HCT116 (cell line): ENCODE measurements at regions of chr14 and their contacts with region 1.

Region 1: DNA sequence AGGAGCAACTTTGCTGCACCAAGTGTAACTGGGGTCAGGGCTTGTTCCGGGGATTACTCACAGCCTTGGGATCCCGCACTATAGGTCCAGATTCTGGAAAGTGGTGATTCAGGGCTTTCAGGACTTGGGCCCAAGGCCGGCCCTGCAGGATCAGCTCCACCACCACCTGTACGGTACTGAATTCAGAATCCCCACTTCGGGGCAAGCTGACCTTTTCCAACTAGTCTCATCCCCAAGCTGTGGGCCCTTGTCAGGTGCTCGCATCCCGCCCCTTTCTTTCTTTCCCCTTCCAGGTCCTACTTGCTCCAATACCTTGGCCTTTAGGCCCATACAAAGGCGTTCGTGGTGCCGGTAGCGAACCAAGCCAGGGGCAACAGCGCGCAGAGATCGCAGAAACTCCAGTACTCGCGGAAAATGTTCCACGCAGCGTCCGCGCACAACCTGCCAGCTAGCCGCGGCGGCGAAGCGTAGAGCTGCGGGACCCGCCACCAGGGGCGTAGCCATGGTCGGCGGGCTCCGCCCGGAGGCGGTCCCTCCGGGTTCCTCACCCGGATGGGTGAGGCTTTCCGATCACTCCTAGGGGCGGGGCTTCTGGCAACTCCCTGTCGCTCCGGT is 487 bp downstream of the TINF2 start:
- DNase-seq: peak; percentile 86
- ATAC-seq: peak; percentile 90
- H3K4me3 ChIP-seq: peak overlapping the region; percentile 72 to 75
- H3K27ac ChIP-seq: peak overlapping the region; percentile 99
- H3K4me1 ChIP-seq: peaks cover 11 to 40% of the 10 kb centered on the region in 2 experiments
- H3K27me3 ChIP-seq: no peaks in the 10 kb centered on the region
- CTCF ChIP-seq: peak in 1 of 3 experiments; percentile 57; a peak in 2 of 6 replicates
- POLR2A ChIP-seq: no peak
- RAD21 ChIP-seq: no peak

Region 2: DNA sequence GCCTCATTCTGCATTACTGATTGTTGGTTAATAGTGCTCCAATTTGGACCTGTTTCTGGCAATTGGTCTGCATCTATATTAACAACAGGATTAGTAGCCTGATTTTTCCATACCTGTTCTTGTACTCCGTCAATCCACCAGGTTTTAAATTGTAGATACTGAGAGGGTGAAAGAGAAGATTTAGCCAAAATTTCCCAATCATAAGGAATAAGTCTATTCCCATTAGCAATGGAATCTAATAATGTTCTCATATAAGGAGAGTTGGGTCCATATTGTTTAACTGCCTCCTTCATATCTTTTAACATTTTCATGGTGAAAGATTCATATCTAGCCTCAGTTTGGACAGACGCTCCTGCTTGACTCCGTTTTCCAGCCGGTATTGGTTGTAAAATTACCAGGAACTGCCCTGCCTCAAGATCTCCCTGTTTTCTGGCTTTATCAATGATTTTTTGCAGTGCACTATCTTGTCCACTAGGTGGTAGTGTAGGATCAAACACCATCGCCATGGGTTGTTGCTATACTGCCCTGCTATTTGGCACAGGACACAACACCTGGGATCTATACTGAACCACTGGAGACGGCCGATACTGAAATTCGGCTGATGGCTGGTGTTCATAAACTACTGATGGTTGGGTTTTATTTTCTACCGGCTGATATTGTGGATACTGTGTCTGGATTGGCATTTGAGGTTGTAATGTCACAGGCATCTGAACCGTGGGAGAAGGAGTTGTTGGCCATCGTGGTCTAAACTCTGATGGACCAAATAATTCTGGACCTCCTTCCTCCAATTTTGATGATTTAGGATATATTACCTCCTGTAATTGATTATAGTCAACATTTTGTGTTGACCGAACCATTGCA is 228.1 kb before region 1 on chr14:
- CTCF ChIA-PET with region 1: no interaction called
- POLR2A ChIA-PET with region 1: no interaction called
- RAD21 ChIA-PET with region 1: no interaction called
- intact Hi-C with region 1: no loop called
- DNase-seq: peak; percentile 78
- ATAC-seq: peak; percentile 99
- H3K4me3 ChIP-seq: no peak overlapping the region
- H3K27ac ChIP-seq: no peak overlapping the region
- H3K4me1 ChIP-seq: peaks cover 0 to 4% of the 10 kb centered on the region in 2 experiments; a peak in 1 of 4 replicates
- H3K27me3 ChIP-seq: no peaks in the 10 kb centered on the region
- CTCF ChIP-seq: peak; percentile 86 to 90 (median 87)
- POLR2A ChIP-seq: no peak
- RAD21 ChIP-seq: peak; percentile 95

Region 3: GRCh38 chr14:24271134-24271833 is 29.3 kb after region 1 on chr14 and contains the start of gene RABGGTA:
- CTCF ChIA-PET with region 1: interaction called, 17 read pairs
- POLR2A ChIA-PET with region 1: interaction called, 20 read pairs
- RAD21 ChIA-PET with region 1: no interaction called
- intact Hi-C with region 1: loop called (anchors 1 kb)
- DNase-seq: peak; percentile 85
- ATAC-seq: peak; percentile 97
- H3K4me3 ChIP-seq: peak within 1 kb of the TSS; percentile 79 to 92
- H3K27ac ChIP-seq: peak within 1 kb of the TSS; percentile 86
- H3K4me1 ChIP-seq: peaks cover 9 to 22% of the 10 kb centered on the region in 2 experiments; a peak in 3 of 4 replicates
- H3K27me3 ChIP-seq: no peaks in the 10 kb centered on the region
- CTCF ChIP-seq: peak; percentile 39 to 75 (median 60); a peak in 5 of 6 replicates
- POLR2A ChIP-seq: peak; percentile 76
- RAD21 ChIP-seq: no peak
- total RNA-seq, gene RABGGTA: 40.8 TPM

Region 4: GRCh38 chr14:24307575-24308341 is 65.8 kb after region 1 on chr14 and contains the start of gene CIDEB:
- CTCF ChIA-PET with region 1: interaction called, 33 read pairs
- POLR2A ChIA-PET with region 1: interaction called, 7 read pairs
- RAD21 ChIA-PET with region 1: no interaction called
- intact Hi-C with region 1: no loop called
- DNase-seq: no peak
- ATAC-seq: peak; percentile 88
- H3K4me3 ChIP-seq: no peak within 1 kb of the TSS
- H3K27ac ChIP-seq: peak within 1 kb of the TSS; percentile 20
- H3K4me1 ChIP-seq: peaks cover 7 to 16% of the 10 kb centered on the region in 2 experiments
- H3K27me3 ChIP-seq: no peaks in the 10 kb centered on the region
- CTCF ChIP-seq: peak; percentile 69 to 98 (median 97); a peak in 5 of 6 replicates
- POLR2A ChIP-seq: no peak
- RAD21 ChIP-seq: peak; percentile 57
- total RNA-seq, gene CIDEB: 0.22 TPM